ENCODE measurements at regions of chr1 and their contacts with region 1.

Region 1: GRCh38 chr1:233868461-233868860 is 36.0 kb upstream of the SLC35F3 start:
- DNase-seq: no peak

Region 2: DNA sequence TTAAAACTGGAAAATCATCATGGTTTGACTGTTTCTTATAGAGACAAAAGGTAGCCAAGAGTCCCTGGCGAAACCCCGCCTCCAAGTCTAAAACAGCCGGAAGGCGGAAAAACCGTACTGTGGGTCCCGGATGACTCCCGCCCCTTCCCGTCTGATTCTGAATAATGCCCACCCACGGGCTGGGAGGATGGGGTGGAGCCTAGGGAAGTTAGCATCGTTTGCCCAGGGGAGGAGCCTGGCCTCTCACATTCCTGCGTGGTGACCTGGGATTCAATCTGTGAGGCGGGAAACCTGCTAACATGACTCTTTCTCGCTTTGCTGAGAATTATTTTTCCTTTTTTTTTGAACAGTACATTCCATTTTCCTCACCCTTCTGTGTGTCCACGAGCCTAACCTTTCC is 129.6 kb before region 1 on chr1:
- intact Hi-C with region 1: no loop called
- DNase-seq: no peak

Region 3: DNA sequence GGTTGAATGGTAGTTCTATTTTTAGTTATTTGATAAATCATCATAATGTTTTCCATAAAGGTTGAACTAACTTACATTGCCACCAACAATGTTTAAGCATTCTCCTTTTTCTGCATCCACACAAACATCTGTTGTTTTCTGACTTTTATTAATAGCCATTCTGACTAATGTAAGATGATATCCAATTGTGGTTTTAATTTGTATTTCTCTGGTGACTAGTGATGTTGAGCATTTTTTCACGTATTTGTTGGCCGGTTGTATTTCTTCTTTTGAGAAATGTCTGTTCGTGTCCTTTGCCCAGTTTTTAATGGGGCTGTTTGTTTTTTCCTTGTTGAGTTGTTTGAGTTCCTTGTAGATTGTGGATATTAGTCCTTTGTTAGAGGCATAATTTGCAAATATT is 11.4 kb after region 1 on chr1:
- intact Hi-C with region 1: loop called in 1 of 2 experiments (anchors 1 kb)
- DNase-seq: no peak

Region 4: GRCh38 chr1:233940908-233941307 is 72.4 kb after region 1 on chr1:
- intact Hi-C with region 1: loop called in 1 of 2 experiments (anchors 2 kb)
- DNase-seq: no peak

Region 5: DNA sequence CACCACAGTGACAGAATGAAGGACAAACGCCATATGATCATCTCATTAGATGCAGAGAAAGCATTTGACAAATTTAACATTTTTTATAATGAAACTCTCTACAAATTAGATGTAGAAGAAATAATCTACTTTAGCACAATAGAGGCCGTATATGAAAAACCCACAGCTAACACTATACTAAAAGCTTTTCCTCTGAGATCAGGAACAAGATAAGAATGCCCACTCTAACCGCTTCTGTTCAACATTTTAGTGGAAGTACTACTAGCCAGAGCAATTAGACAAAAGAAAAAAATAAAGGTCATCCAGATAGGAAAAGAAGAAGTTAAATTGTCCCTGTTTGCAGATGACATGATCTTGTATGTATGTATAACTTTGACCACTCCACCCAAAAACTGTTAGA is 145.7 kb after region 1 on chr1:
- intact Hi-C with region 1: no loop called
- DNase-seq: no peak

Measured in posterior vena cava (tissue), 2 donors.